HCT116 (cell line): ENCODE measurements at regions of chr1 and their contacts with region 1.

Region 1: GRCh38 chr1:186363891-186364290 is 11.2 kb downstream of the TPR start:
- DNase-seq: no peak
- ATAC-seq: no peak
- H3K4me3 ChIP-seq: no peak overlapping the region
- H3K27ac ChIP-seq: no peak overlapping the region
- H3K4me1 ChIP-seq: no peaks in the 10 kb centered on the region
- H3K27me3 ChIP-seq: no peaks in the 10 kb centered on the region
- CTCF ChIP-seq: no peak
- POLR2A ChIP-seq: no peak
- RAD21 ChIP-seq: no peak

Region 2: DNA sequence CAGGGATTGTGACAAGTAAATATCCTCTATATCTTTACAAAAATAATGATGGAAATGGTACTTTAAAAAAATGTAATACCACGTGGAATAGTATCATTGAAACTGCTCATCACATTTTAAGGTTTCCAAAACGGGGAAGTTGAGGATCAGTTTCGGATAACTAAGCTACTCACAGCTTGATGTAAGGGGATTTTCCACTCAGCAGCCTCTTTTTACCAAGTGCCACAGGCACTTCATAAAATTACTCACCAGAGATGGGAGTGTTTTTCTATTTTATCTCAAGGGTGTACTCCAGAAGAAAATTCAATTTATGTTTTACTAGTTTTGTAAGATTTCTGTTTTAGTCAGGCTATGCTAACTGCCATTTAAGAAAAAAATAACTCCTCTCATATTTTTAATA is 80.5 kb before region 1 on chr1:
- CTCF ChIA-PET with region 1: no interaction called
- POLR2A ChIA-PET with region 1: no interaction called
- RAD21 ChIA-PET with region 1: no interaction called
- intact Hi-C with region 1: no loop called
- DNase-seq: no peak
- ATAC-seq: no peak
- H3K4me3 ChIP-seq: no peak overlapping the region
- H3K27ac ChIP-seq: no peak overlapping the region
- H3K4me1 ChIP-seq: 0 out of 4 replicates have a peak, but pooled peaks cover 0 to 3% of the 10 kb centered on the region in 2 experiments
- H3K27me3 ChIP-seq: no peaks in the 10 kb centered on the region
- CTCF ChIP-seq: no peak
- POLR2A ChIP-seq: no peak
- RAD21 ChIP-seq: no peak

Region 3: DNA sequence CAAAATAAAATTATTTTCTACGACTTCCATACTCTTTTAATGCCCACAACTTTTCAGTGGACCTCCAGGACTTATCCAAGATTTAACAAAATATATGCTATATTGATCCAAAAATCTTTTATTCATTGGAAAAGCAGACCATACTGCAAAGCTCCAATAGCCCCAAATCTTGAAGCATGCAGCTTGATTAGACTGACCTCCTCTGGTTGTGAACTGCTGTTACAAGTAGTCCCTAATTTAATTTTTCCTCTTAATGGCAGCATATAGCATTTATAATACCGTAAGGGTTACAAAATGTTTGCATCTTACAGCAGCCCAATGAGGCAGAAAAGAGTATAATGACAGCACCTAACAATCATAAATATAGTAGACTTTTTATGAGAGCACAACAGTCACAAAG is 38.7 kb before region 1 on chr1:
- CTCF ChIA-PET with region 1: interaction called, 4 read pairs
- POLR2A ChIA-PET with region 1: no interaction called
- RAD21 ChIA-PET with region 1: no interaction called
- intact Hi-C with region 1: loop called (anchors 5 kb)
- DNase-seq: peak; percentile 2
- ATAC-seq: peak; percentile 73
- H3K4me3 ChIP-seq: no peak overlapping the region
- H3K27ac ChIP-seq: no peak overlapping the region
- H3K4me1 ChIP-seq: no peaks in the 10 kb centered on the region
- H3K27me3 ChIP-seq: no peaks in the 10 kb centered on the region
- CTCF ChIP-seq: peak; percentile 24 to 57 (median 43); a peak in 4 of 6 replicates
- POLR2A ChIP-seq: no peak
- RAD21 ChIP-seq: peak; percentile 42; the same call in 1 of the 2 replicates

Region 4: GRCh38 chr1:186700712-186701111 is 336.8 kb after region 1 on chr1:
- CTCF ChIA-PET with region 1: no interaction called
- POLR2A ChIA-PET with region 1: no interaction called
- RAD21 ChIA-PET with region 1: no interaction called
- intact Hi-C with region 1: no loop called
- DNase-seq: no peak
- ATAC-seq: no peak
- H3K4me3 ChIP-seq: no peak overlapping the region
- H3K27ac ChIP-seq: no peak overlapping the region
- H3K4me1 ChIP-seq: no peaks in the 10 kb centered on the region
- H3K27me3 ChIP-seq: no peaks in the 10 kb centered on the region
- CTCF ChIP-seq: no peak
- POLR2A ChIP-seq: no peak
- RAD21 ChIP-seq: no peak